ENCODE measurements at regions of chr6 and their contacts with region 1.

Region 1: DNA sequence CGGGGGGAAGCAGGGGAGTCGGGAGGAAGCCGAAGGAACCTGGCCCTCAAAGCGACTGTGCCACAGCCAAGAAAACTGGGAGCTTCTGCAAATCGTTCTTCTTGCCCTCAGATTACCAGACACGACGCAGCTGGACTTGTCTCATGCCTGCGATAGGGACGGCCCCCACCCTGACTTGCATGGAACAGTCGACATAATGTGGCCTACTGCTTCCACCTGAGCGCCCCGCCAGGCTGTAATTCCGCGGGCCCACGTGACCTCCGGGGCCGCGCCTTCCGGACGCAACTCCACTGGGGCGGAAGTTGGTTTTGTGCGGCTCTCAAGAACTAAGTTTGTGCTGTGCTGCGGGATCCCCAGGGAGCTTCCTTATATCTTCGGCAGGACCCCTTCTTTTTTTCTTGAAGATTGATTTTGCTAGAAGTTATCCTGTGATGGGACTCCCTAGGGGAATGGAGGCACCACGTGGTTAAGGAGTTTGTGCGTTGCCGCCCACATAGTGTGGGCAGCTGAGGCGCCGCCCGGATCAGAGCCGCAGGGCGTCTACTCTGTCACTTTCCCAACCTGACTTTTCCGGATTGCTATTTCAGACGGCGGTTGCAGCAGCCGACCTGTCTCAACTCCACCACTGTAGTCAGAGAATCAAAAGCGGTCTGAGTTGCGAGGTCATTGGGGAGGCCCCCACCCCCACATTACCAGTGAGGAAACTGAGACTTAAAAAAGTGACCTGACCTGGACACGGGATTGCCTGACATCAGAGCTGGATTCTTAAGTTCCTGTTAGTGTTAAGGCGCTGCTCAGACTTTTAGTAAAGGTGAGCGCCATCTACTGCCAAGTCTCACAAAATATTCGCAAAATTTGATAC is 540 bp upstream of the CD164 start:
- DNase-seq: peak; percentile 90 to 97 (median 96)
- ATAC-seq: peak; percentile 82
- H3K4me3 ChIP-seq: peak overlapping the region; percentile 89
- H3K4me3 Mint-ChIP-seq: peak overlapping the region; percentile 88 to 99 (median 98)
- H3K27ac ChIP-seq: peak overlapping the region; percentile 95
- H3K27ac Mint-ChIP-seq: peak overlapping the region; percentile 92 to 100 (median 99)
- H3K4me1 ChIP-seq: peaks cover 22 to 32% of the 10 kb centered on the region in 2 donors
- H3K4me1 Mint-ChIP-seq: peaks cover 34 to 58% (median 51%) of the 10 kb centered on the region in 7 donors
- H3K27me3 ChIP-seq: no peaks in the 10 kb centered on the region
- H3K27me3 Mint-ChIP-seq: peaks cover 0 to 7% (median 0%) of the 10 kb centered on the region in 5 donors

Region 2: DNA sequence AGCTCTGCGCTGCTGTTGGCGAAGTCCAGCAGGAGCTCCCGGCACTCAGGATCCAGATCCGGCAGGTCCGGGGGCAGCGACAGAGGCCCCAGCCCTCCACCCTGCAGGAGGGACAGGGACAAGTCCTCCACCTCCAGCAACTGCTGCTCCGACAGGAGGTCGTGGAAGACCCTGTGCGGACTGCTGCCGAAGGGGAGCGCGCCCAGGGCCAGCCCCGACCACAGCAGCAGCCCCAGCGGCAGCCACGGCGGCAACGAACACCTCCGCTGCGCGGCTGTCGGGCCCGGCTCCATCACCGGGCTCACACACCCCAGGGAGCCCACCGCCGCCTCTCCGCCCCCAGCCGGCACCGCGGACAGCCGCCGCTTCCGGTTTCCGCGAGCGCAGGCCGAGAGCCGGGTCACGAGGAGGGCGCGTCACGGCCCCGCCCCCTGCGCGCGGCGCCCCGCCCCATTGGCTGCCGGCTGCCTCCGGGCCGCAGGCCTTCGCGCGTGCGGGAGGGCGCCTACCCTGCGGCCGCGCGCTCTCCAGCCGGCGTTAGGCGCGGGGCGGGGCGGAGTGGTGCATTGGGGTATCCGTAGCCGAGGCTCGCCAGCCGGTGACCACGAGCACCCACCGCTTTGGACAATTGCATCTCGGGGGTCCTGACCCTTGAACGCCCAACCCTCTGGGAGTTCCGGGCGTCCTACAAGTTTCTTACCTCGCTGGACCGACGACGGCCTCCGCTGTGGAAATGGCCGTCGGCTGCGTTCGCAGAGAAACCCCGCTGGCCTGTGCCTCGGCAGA is 1308.3 kb before region 1 on chr6 and contains the start of gene OSTM1:
- CTCF ChIA-PET with region 1: no interaction called
- POLR2A ChIA-PET with region 1: no interaction called
- intact Hi-C with region 1: loop called in 1 of 2 experiments (anchors 5 kb)
- DNase-seq: peak; percentile 88 to 98 (median 94)
- ATAC-seq: peak; percentile 99
- H3K4me3 ChIP-seq: peak within 1 kb of the TSS; percentile 99
- H3K4me3 Mint-ChIP-seq: peak within 1 kb of the TSS; percentile 84 to 94 (median 90)
- H3K27ac ChIP-seq: peak within 1 kb of the TSS; percentile 89
- H3K27ac Mint-ChIP-seq: peak within 1 kb of the TSS; percentile 81 to 98 (median 91)
- H3K4me1 ChIP-seq: peaks cover 18% of the 10 kb centered on the region in 2 donors
- H3K4me1 Mint-ChIP-seq: peaks cover 11 to 35% (median 23%) of the 10 kb centered on the region in 7 donors
- H3K27me3 ChIP-seq: no peaks in the 10 kb centered on the region
- H3K27me3 Mint-ChIP-seq: peaks cover 0 to 25% (median 4%) of the 10 kb centered on the region in 5 donors
- total RNA-seq, gene OSTM1: 25.0 to 48.9 (median 36.7) TPM

Region 3: GRCh38 chr6:108848116-108848868 is 534.5 kb before region 1 on chr6 and contains the start of gene ARMC2:
- CTCF ChIA-PET with region 1: no interaction called
- POLR2A ChIA-PET with region 1: no interaction called
- intact Hi-C with region 1: loop called in 1 of 2 experiments (anchors 1 kb)
- DNase-seq: peak; percentile 72 to 95 (median 79)
- ATAC-seq: peak; percentile 94
- H3K4me3 ChIP-seq: peak within 1 kb of the TSS; percentile 90
- H3K4me3 Mint-ChIP-seq: peak within 1 kb of the TSS; percentile 75 to 93 (median 88)
- H3K27ac ChIP-seq: peak within 1 kb of the TSS; percentile 69
- H3K27ac Mint-ChIP-seq: peak within 1 kb of the TSS; percentile 72 to 93 (median 85)
- H3K4me1 ChIP-seq: peaks cover 6 to 13% of the 10 kb centered on the region in 2 donors
- H3K4me1 Mint-ChIP-seq: peaks cover 11 to 39% (median 29%) of the 10 kb centered on the region in 7 donors
- H3K27me3 ChIP-seq: no peaks in the 10 kb centered on the region
- H3K27me3 Mint-ChIP-seq: peaks cover 0 to 36% (median 0%) of the 10 kb centered on the region in 5 donors
- total RNA-seq, gene ARMC2: 6.2 to 12.7 (median 7.9) TPM

Region 4: GRCh38 chr6:108999428-108999827 is 383.4 kb before region 1 on chr6:
- CTCF ChIA-PET with region 1: no interaction called
- POLR2A ChIA-PET with region 1: no interaction called
- intact Hi-C with region 1: no loop called
- DNase-seq: no peak
- ATAC-seq: no peak
- H3K4me3 ChIP-seq: no peak overlapping the region
- H3K4me3 Mint-ChIP-seq: no peak overlapping the region
- H3K27ac ChIP-seq: no peak overlapping the region
- H3K27ac Mint-ChIP-seq: no peak overlapping the region
- H3K4me1 ChIP-seq: peaks cover 3 to 7% of the 10 kb centered on the region in 2 donors
- H3K4me1 Mint-ChIP-seq: peaks cover 0 to 35% (median 28%) of the 10 kb centered on the region in 7 donors
- H3K27me3 ChIP-seq: no peaks in the 10 kb centered on the region
- H3K27me3 Mint-ChIP-seq: no peaks in the 10 kb centered on the region

Region 5: DNA sequence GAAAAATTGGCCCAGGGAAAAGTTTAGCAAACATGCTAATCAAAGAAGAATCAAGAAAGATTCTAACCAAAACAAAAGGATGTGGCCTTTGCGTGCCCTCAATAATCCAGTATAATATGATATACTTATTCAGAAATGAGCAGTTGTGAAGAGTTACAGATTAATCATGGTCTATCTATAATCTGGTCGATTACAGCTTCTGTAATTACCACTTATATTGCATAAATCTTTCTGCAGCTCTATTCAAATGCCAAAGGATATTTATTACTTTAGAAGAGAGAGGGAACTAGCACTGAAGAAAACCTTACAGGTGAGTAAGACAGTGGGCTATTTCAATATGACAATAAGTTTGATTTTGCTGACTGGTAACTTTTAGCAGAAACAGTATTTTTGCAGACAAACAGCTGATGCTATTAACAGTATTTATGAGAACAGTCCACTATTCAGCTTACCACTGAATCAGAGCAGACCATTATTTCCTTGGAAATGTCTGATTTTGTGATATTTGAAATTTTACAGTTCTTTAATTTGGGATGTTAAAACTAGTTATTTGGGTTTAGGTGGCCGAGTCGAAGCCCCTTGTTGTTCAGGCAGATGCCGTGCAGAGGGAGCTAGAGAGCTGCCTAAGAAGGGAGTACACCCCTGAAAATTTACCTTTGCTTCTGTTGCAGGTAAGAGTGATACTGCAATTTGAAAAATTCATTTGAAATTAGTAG is 195.2 kb before region 1 on chr6:
- CTCF ChIA-PET with region 1: interaction called, 94 read pairs
- POLR2A ChIA-PET with region 1: interaction called, 44 read pairs
- intact Hi-C with region 1: loop called (anchors 1 kb)
- DNase-seq: peak; percentile 19 to 68 (median 56)
- ATAC-seq: peak; percentile 91
- H3K4me3 ChIP-seq: no peak overlapping the region
- H3K4me3 Mint-ChIP-seq: no peak overlapping the region
- H3K27ac ChIP-seq: no peak overlapping the region
- H3K27ac Mint-ChIP-seq: no peak overlapping the region
- H3K4me1 ChIP-seq: no peaks in the 10 kb centered on the region
- H3K4me1 Mint-ChIP-seq: peaks cover 0 to 4% (median 0%) of the 10 kb centered on the region in 7 donors
- H3K27me3 ChIP-seq: peaks cover 0 to 3% of the 10 kb centered on the region in 2 donors
- H3K27me3 Mint-ChIP-seq: peaks cover 1 to 45% (median 8%) of the 10 kb centered on the region in 5 donors

Region 6: GRCh38 chr6:109526905-109527628 is 144.3 kb after region 1 on chr6:
- CTCF ChIA-PET with region 1: no interaction called
- POLR2A ChIA-PET with region 1: no interaction called
- intact Hi-C with region 1: loop called in 1 of 2 experiments (anchors 5 kb)
- DNase-seq: peak; percentile 7 to 70 (median 59)
- ATAC-seq: peak; percentile 79
- H3K4me3 ChIP-seq: no peak overlapping the region
- H3K4me3 Mint-ChIP-seq: no peak overlapping the region
- H3K27ac ChIP-seq: no peak overlapping the region
- H3K27ac Mint-ChIP-seq: peak overlapping the region in 1 of 9 donors; percentile 86
- H3K4me1 ChIP-seq: no peaks in the 10 kb centered on the region
- H3K4me1 Mint-ChIP-seq: peaks cover 0 to 4% (median 0%) of the 10 kb centered on the region in 7 donors
- H3K27me3 ChIP-seq: no peaks in the 10 kb centered on the region
- H3K27me3 Mint-ChIP-seq: peaks cover 0 to 6% (median 0%) of the 10 kb centered on the region in 5 donors

Region 7: GRCh38 chr6:110815217-110816109 is 1432.7 kb after region 1 on chr6 and contains the start of gene CDK19:
- CTCF ChIA-PET with region 1: no interaction called
- POLR2A ChIA-PET with region 1: interaction called, 4 read pairs
- intact Hi-C with region 1: loop called in 1 of 2 experiments (anchors 2 kb)
- DNase-seq: peak; percentile 94 to 99 (median 99)
- ATAC-seq: peak; percentile 87
- H3K4me3 ChIP-seq: peak within 1 kb of the TSS; percentile 97
- H3K4me3 Mint-ChIP-seq: peak within 1 kb of the TSS; percentile 94 to 100 (median 98)
- H3K27ac ChIP-seq: peak within 1 kb of the TSS; percentile 89
- H3K27ac Mint-ChIP-seq: peak within 1 kb of the TSS; percentile 89 to 100 (median 99)
- H3K4me1 ChIP-seq: peaks cover 11 to 15% of the 10 kb centered on the region in 2 donors
- H3K4me1 Mint-ChIP-seq: peaks cover 14 to 46% (median 26%) of the 10 kb centered on the region in 7 donors
- H3K27me3 ChIP-seq: no peaks in the 10 kb centered on the region
- H3K27me3 Mint-ChIP-seq: no peaks in the 10 kb centered on the region
- total RNA-seq, gene CDK19: 11.3 to 24.4 (median 21.0) TPM

Measured in naive thymus-derived CD4-positive, alpha-beta T cell (primary cell).